CD4-positive, alpha-beta memory T cell (primary cell): ENCODE measurements at regions of chr9 and their contacts with region 1.

Region 1: GRCh38 chr9:114894801-114895433 is 35.5 kb downstream of the TNFSF8 start:
- DNase-seq: no peak
- H3K4me3 ChIP-seq: no peak overlapping the region
- H3K4me3 Mint-ChIP-seq: peak overlapping the region in 6 of 8 donors; percentile 15 to 81 (median 67)
- H3K27ac ChIP-seq: no peak overlapping the region
- H3K27ac Mint-ChIP-seq: peak overlapping the region in 6 of 7 donors; percentile 43 to 92 (median 81)
- H3K4me1 ChIP-seq: peaks cover 79% of the 10 kb centered on the region
- H3K4me1 Mint-ChIP-seq: peaks cover 17 to 54% (median 42%) of the 10 kb centered on the region in 4 donors
- H3K27me3 ChIP-seq: no peaks in the 10 kb centered on the region
- H3K27me3 Mint-ChIP-seq: no peaks in the 10 kb centered on the region

Region 2: GRCh38 chr9:114709636-114710035 is 185.3 kb before region 1 on chr9:
- CTCF ChIA-PET with region 1: no interaction called
- POLR2A ChIA-PET with region 1: no interaction called
- intact Hi-C with region 1: no loop called
- DNase-seq: no peak
- H3K4me3 ChIP-seq: no peak overlapping the region
- H3K4me3 Mint-ChIP-seq: no peak overlapping the region
- H3K27ac ChIP-seq: no peak overlapping the region
- H3K27ac Mint-ChIP-seq: peak overlapping the region in 5 of 7 donors; percentile 6 to 52 (median 29)
- H3K4me1 ChIP-seq: peaks cover 8% of the 10 kb centered on the region
- H3K4me1 Mint-ChIP-seq: peaks cover 15 to 25% (median 17%) of the 10 kb centered on the region in 4 donors
- H3K27me3 ChIP-seq: no peaks in the 10 kb centered on the region
- H3K27me3 Mint-ChIP-seq: no peaks in the 10 kb centered on the region

Region 3: DNA sequence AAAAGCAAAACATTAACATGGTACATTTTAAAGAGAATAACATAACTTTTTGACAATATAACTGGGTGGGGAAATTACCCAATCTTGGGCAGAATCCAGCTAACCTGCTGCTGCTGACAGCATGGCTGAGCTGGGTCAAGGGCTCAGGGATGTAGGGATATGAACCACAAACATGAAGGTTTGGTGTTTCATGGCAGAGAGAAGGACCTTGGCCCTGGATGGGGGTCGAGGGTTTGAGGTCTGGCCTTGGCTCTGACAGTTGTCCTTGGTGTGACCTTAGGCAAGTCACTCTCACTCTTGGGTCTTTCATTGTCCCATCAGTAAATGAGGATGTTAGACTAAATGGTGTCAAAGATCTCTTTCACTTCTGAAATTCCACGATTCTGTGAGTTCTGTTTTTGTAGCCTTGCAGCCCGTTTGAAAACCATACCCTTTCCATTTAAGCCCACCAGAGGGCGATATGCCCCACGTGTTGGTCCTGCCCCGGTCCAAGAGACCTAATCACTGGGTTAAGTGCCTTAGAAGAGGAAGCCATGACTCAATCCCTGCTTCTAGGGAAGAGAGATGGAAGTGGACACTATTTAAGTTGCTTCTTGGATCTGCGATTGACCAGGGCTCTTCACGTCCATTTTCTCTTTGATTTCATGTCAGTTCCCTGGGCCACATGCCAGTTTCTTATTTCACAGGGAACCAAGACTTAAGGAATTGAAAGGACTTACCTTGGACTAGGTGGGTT is 156.2 kb before region 1 on chr9:
- CTCF ChIA-PET with region 1: interaction called, 46 read pairs
- POLR2A ChIA-PET with region 1: interaction called, 18 read pairs
- intact Hi-C with region 1: no loop called
- DNase-seq: peak; percentile 73 to 75 (median 74)
- H3K4me3 ChIP-seq: no peak overlapping the region
- H3K4me3 Mint-ChIP-seq: peak overlapping the region in 3 of 8 donors; percentile 16 to 64 (median 36)
- H3K27ac ChIP-seq: no peak overlapping the region
- H3K27ac Mint-ChIP-seq: peak overlapping the region; percentile 67 to 95 (median 91)
- H3K4me1 ChIP-seq: peaks cover 44% of the 10 kb centered on the region
- H3K4me1 Mint-ChIP-seq: peaks cover 34 to 54% (median 43%) of the 10 kb centered on the region in 4 donors
- H3K27me3 ChIP-seq: no peaks in the 10 kb centered on the region
- H3K27me3 Mint-ChIP-seq: no peaks in the 10 kb centered on the region

Region 4: GRCh38 chr9:114869845-114870244 is 25.1 kb before region 1 on chr9:
- CTCF ChIA-PET with region 1: interaction called, 3 read pairs
- POLR2A ChIA-PET with region 1: interaction called, 42 read pairs
- intact Hi-C with region 1: no loop called
- DNase-seq: peak in 4 of 5 donors; percentile 8 to 29 (median 22)
- H3K4me3 ChIP-seq: peak overlapping the region in 1 of 2 donors; percentile 9
- H3K4me3 Mint-ChIP-seq: peak overlapping the region in 7 of 8 donors; percentile 54 to 73 (median 65)
- H3K27ac ChIP-seq: no peak overlapping the region
- H3K27ac Mint-ChIP-seq: peak overlapping the region; percentile 7 to 87 (median 62)
- H3K4me1 ChIP-seq: peaks cover 20% of the 10 kb centered on the region
- H3K4me1 Mint-ChIP-seq: peaks cover 19 to 29% (median 24%) of the 10 kb centered on the region in 4 donors
- H3K27me3 ChIP-seq: no peaks in the 10 kb centered on the region
- H3K27me3 Mint-ChIP-seq: no peaks in the 10 kb centered on the region

Region 5: DNA sequence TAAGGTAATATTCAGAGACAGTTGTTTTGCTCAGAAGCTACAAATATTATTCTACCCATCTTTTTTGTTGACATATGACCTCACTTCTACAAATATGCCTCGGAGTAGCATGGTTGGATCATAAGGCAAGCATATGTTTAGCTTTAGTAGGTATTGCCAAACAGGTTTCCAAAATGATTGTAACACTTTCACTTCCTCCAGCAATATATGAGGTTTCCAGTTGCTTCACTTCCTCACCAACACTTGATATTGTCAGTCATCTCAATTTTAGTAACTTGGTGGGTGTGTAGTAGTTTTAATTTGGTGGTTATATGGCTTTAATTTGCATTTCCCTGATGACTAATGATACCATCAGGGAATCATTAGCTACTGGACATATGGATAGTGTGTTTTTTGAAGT is 11.2 kb before region 1 on chr9:
- CTCF ChIA-PET with region 1: interaction called, 4 read pairs
- POLR2A ChIA-PET with region 1: interaction called, 30 read pairs
- intact Hi-C with region 1: loop called (anchors 2 kb)
- DNase-seq: no peak
- H3K4me3 ChIP-seq: no peak overlapping the region
- H3K4me3 Mint-ChIP-seq: no peak overlapping the region
- H3K27ac ChIP-seq: no peak overlapping the region
- H3K27ac Mint-ChIP-seq: no peak overlapping the region
- H3K4me1 ChIP-seq: peaks cover 9% of the 10 kb centered on the region
- H3K4me1 Mint-ChIP-seq: peaks cover 9 to 16% (median 11%) of the 10 kb centered on the region in 4 donors
- H3K27me3 ChIP-seq: no peaks in the 10 kb centered on the region
- H3K27me3 Mint-ChIP-seq: no peaks in the 10 kb centered on the region

Region 6: GRCh38 chr9:114919611-114920010 is 24.7 kb after region 1 on chr9:
- CTCF ChIA-PET with region 1: interaction called, 11 read pairs
- POLR2A ChIA-PET with region 1: interaction called, 11 read pairs
- intact Hi-C with region 1: no loop called
- DNase-seq: no peak
- H3K4me3 ChIP-seq: no peak overlapping the region
- H3K4me3 Mint-ChIP-seq: peak overlapping the region in 7 of 8 donors; percentile 57 to 68 (median 67)
- H3K27ac ChIP-seq: no peak overlapping the region
- H3K27ac Mint-ChIP-seq: peak overlapping the region; percentile 72 to 89 (median 88)
- H3K4me1 ChIP-seq: peaks cover 86% of the 10 kb centered on the region
- H3K4me1 Mint-ChIP-seq: peaks cover 73 to 99% (median 87%) of the 10 kb centered on the region in 4 donors
- H3K27me3 ChIP-seq: no peaks in the 10 kb centered on the region
- H3K27me3 Mint-ChIP-seq: no peaks in the 10 kb centered on the region

Region 7: GRCh38 chr9:114988962-114989599 is 94.2 kb after region 1 on chr9:
- CTCF ChIA-PET with region 1: no interaction called
- POLR2A ChIA-PET with region 1: interaction called, 11 read pairs
- intact Hi-C with region 1: no loop called
- DNase-seq: peak in 1 of 5 donors; percentile 44
- H3K4me3 ChIP-seq: no peak overlapping the region
- H3K4me3 Mint-ChIP-seq: peak overlapping the region in 7 of 8 donors; percentile 1 to 77 (median 57)
- H3K27ac ChIP-seq: peak overlapping the region; percentile 27
- H3K27ac Mint-ChIP-seq: peak overlapping the region; percentile 82 to 96 (median 88)
- H3K4me1 ChIP-seq: peaks cover 24% of the 10 kb centered on the region
- H3K4me1 Mint-ChIP-seq: peaks cover 21 to 46% (median 32%) of the 10 kb centered on the region in 4 donors
- H3K27me3 ChIP-seq: no peaks in the 10 kb centered on the region
- H3K27me3 Mint-ChIP-seq: no peaks in the 10 kb centered on the region

Region 8: DNA sequence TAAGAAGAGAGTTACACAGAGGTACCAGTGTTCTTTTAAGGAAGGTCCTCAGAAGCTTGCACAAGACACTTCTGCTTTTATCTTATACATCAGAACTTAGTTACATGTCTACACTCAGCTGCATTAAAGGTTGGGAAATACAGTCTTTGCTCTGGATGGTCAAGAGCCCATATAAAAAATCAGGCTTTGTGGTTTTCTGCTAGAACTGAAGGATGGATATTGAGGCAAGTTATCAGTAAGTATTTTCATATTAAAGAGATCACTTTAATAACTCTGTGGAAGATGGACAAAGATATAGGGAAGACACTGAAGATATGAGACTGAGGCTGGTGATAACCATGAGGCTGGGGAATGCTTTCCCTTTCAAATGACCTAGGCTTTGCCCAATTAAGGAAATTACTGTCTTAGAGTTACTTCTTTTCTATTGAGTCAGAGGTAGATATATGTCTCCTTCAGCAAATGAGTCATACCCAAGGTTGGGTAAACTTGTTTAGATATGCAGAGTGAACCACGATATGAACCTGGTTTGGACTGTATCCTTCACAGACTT is 310.1 kb after region 1 on chr9:
- CTCF ChIA-PET with region 1: no interaction called
- POLR2A ChIA-PET with region 1: no interaction called
- intact Hi-C with region 1: no loop called
- DNase-seq: no peak
- H3K4me3 ChIP-seq: no peak overlapping the region
- H3K4me3 Mint-ChIP-seq: no peak overlapping the region
- H3K27ac ChIP-seq: no peak overlapping the region
- H3K27ac Mint-ChIP-seq: no peak overlapping the region
- H3K4me1 ChIP-seq: no peaks in the 10 kb centered on the region
- H3K4me1 Mint-ChIP-seq: no peaks in the 10 kb centered on the region
- H3K27me3 ChIP-seq: no peaks in the 10 kb centered on the region
- H3K27me3 Mint-ChIP-seq: peaks cover 23 to 30% of the 10 kb centered on the region in 2 donors